ENCODE measurements at regions of chr11 and their contacts with region 1.

Region 1: GRCh38 chr11:112219476-112220232 is 6.6 kb upstream of the PTS start:
- DNase-seq: peak in 1 of 2 donors; percentile 34
- H3K4me3 ChIP-seq: no peak overlapping the region
- H3K27ac ChIP-seq: no peak overlapping the region
- H3K4me1 ChIP-seq: no peaks in the 10 kb centered on the region
- H3K27me3 ChIP-seq: no peaks in the 10 kb centered on the region
- CTCF ChIP-seq: peak; percentile 51 to 90 (median 87)
- POLR2A ChIP-seq: no peak

Region 2: DNA sequence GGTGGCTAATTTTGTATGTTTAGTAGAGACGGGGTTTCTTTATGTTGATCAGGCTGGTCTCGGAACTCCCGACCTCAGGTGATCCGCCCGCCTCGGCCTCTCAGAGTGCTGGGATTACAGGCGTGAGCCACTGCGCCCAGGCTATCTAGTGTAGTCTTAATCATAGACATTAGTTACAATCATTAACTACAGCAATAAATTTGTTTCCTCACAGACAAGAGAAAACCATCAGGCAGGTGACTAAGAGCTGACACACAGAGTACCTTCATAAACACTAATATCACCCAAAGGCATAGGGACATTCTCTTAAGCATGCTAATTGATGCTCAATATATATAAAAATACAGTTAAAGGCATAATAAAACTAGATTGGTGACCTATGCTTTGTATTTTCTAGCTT is 113.6 kb before region 1 on chr11:
- intact Hi-C with region 1: no loop called
- DNase-seq: no peak
- H3K4me3 ChIP-seq: no peak overlapping the region
- H3K27ac ChIP-seq: no peak overlapping the region
- H3K4me1 ChIP-seq: no peaks in the 10 kb centered on the region
- H3K27me3 ChIP-seq: no peaks in the 10 kb centered on the region
- CTCF ChIP-seq: no peak
- POLR2A ChIP-seq: no peak

Region 3: GRCh38 chr11:112200252-112200651 is 19.4 kb before region 1 on chr11:
- intact Hi-C with region 1: loop called (anchors 1 kb)
- DNase-seq: no peak
- H3K4me3 ChIP-seq: no peak overlapping the region
- H3K27ac ChIP-seq: no peak overlapping the region
- H3K4me1 ChIP-seq: no peaks in the 10 kb centered on the region
- H3K27me3 ChIP-seq: no peaks in the 10 kb centered on the region
- CTCF ChIP-seq: no peak
- POLR2A ChIP-seq: no peak

Region 4: DNA sequence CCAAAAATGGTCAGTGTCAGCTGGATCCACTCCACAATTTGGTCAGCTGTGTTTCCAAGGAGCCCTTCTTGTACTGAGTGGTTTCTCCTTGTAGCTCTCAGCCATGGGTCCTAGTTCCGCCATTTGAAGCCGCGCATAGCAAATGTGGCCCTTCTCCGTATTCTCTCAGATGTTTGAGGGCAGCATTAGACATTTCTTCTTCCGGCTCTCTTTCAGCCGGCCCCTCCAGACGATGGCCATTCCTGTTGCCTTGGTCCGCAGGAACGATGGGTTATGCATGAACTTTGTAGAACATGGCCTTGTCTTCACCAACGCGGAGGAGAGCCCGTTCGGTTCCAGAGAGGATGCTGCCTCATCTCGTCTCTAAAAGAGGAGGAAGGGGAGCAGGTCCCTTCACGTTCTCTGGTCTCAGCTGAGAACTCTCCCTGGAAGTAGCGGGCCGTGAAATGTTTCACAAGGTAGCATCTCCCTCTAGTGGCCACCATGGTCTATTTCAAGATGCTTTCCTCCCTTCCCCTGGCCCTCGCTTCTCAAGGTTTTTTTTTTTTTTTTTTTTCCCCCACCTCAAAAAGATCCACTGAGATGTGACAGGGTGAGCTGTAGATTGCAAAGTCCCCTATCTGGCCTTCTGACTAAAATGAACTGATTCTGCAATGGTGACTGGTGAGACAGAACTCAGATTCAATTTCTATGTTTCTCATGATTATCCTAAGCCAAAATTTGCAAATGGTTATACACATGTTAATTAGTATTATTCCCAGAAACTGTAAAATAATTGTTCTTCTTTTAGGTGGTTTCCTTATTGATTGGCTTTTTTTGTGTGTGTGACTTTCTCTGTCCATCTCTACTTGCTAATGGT is 60.8 kb after region 1 on chr11:
- intact Hi-C with region 1: loop called (anchors 5 kb)
- DNase-seq: peak in 1 of 2 donors; percentile 47
- H3K4me3 ChIP-seq: peak overlapping the region; percentile 45 to 59 (median 45)
- H3K27ac ChIP-seq: peak overlapping the region in 1 of 2 donors; percentile 6
- H3K4me1 ChIP-seq: no peaks in the 10 kb centered on the region
- H3K27me3 ChIP-seq: no peaks in the 10 kb centered on the region
- CTCF ChIP-seq: peak; percentile 82 to 89 (median 82)
- POLR2A ChIP-seq: no peak